ENCODE measurements at regions of chr15 and their contacts with region 1.

Region 1: DNA sequence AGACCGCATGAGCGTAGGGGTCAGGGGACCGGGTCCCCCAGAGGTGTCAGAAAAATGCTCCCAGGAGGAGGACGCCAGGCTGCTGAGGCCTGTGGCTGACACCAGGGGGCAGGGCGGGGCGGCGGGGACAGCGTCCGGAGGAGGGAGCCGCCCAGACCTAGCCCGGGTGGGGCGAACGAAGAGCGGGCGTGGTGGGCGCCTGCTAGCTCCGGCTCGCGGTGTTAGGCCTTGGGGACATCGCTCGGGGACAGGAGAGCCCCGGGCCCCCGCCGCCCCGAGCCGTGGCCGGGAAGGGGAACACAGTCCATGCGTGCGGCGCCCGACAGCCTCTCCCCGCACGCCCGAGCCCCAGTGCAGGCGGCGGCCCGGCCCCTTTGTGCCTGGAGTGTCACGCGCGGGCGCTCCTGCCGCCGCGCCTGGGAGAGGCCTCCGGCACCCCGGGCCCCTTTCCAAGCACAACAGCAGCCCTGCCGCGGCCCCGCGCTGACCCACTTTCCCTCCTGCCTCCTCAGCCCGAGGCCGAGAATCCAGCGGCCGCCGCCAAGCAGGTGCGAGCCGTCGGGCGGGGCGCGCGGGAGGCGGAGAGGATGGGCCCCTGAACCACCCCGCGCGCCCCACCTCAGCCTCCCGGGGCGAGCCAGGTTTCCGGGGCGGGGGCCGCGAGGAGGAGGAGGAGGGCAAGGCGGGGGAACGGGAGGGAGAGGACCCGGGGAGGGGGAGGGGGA is 111.0 kb upstream of the KLF13 start:
- DNase-seq: peak; percentile 76 to 95 (median 95)
- ATAC-seq: peak; percentile 86 to 87
- H3K4me3 ChIP-seq: peak overlapping the region; percentile 55
- H3K27ac ChIP-seq: peak overlapping the region; percentile 53
- H3K4me1 ChIP-seq: peaks cover 4% of the 10 kb centered on the region
- H3K27me3 ChIP-seq: no peaks in the 10 kb centered on the region

Region 2: GRCh38 chr15:30827625-30828288 is 387.9 kb before region 1 on chr15:
- intact Hi-C with region 1: no loop called
- DNase-seq: no peak
- ATAC-seq: no peak
- H3K4me3 ChIP-seq: no peak overlapping the region
- H3K27ac ChIP-seq: no peak overlapping the region
- H3K4me1 ChIP-seq: no peaks in the 10 kb centered on the region
- H3K27me3 ChIP-seq: no peaks in the 10 kb centered on the region

Region 3: DNA sequence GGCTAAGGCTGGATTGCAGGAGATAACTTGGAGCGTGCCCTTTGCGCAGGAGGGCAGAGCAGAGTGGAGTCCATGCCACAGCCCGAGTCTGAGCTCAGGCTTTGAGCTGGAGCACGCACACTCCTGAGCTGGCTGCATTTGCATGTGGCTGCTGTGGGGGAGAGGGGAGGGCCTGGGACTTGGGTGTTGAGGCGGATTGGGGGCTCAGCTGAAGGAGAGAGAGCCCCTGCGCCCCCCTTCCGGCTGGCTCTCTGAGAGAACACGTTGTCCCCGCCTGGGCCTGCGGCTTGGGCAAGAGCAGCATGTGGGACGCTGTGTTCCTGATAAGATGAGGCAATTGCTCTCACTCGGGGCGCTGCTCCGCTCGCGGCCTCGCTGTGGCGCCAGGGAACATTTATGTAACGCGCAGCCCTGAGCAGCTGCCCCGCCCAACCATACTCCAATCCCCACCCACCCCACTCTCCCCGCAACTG is 150.0 kb after region 1 on chr15:
- intact Hi-C with region 1: no loop called
- DNase-seq: peak; percentile 91 to 99 (median 98)
- ATAC-seq: peak; percentile 93
- H3K4me3 ChIP-seq: peak overlapping the region; percentile 30
- H3K27ac ChIP-seq: peak overlapping the region; percentile 98
- H3K4me1 ChIP-seq: peaks cover 49% of the 10 kb centered on the region
- H3K27me3 ChIP-seq: no peaks in the 10 kb centered on the region

Region 4: DNA sequence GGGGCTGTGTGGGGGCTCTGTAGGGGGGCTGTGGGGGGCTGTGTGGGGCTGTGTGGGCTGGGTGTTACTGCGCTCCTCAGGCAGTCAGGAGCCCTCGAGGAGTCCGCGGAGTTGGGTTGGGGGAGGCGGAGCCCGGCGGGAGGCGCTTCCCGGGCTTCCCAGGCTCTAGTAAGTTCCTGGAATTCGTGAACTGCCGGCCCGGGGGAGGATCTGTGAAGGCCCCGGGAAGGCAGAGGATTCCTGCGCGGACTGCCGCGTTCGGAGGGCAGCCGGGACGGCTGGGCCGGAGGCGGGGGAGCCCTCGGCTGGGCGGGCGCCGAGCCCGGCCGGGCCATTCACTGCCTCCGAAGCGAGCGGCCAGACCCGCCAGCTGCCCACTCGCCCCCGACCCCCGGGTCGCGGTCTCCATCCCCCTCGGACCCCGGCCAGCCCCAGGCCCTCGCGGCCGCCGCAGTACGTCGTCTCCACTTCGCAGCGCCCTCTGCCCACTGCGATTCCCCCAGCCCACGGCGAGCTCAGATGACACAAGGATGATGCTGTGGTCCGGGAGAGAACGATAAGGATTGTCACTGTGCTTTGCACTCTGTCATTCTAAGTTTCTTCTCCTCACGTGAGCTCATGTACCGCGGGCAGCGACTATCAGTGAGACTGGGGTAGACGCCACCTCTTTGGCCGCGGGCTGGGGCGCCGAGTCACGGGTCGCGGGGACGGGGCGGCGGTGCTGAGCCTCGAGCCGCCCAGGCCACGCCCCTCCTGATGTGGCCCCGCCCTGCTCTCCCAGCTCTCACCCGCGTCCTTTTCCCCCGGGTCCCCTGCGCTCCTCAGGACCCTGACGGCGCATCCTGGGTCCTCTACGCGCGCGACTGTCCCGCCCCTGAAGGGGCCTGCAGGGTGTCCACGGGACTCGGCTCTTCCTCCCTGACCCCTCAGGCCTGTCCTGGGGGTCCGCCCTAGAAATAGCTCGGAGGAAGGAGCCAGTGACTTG is 176.3 kb after region 1 on chr15:
- intact Hi-C with region 1: loop called in 2 of 4 experiments (anchors 10 kb)
- DNase-seq: peak; percentile 84 to 97 (median 97)
- ATAC-seq: peak; percentile 86 to 87
- H3K4me3 ChIP-seq: peak overlapping the region; percentile 57
- H3K27ac ChIP-seq: peak overlapping the region; percentile 97
- H3K4me1 ChIP-seq: no peaks in the 10 kb centered on the region
- H3K27me3 ChIP-seq: no peaks in the 10 kb centered on the region

Measured in right cardiac atrium (tissue), 5 donors.